Gastrocnemius medialis (tissue), 4 donors: ENCODE measurements at regions of chr22 and their contacts with region 1.

Region 1: GRCh38 chr22:40679964-40680818 is 907 bp downstream of the MCHR1 start:
- DNase-seq: no peak
- ATAC-seq: no peak
- H3K4me3 ChIP-seq: no peak overlapping the region
- H3K27ac ChIP-seq: no peak overlapping the region
- H3K4me1 ChIP-seq: peaks cover 11 to 13% of the 10 kb centered on the region in 2 donors
- H3K27me3 ChIP-seq: peaks cover 11 to 15% (median 13%) of the 10 kb centered on the region in 3 donors
- CTCF ChIP-seq: no peak
- POLR2A ChIP-seq: no peak

Region 2: GRCh38 chr22:40757071-40757470 is 76.9 kb after region 1 on chr22:
- in situ Hi-C with region 1: no loop called
- intact Hi-C with region 1: loop called (anchors 10 kb)
- DNase-seq: no peak
- ATAC-seq: no peak
- H3K4me3 ChIP-seq: no peak overlapping the region
- H3K27ac ChIP-seq: no peak overlapping the region
- H3K4me1 ChIP-seq: no peaks in the 10 kb centered on the region
- H3K27me3 ChIP-seq: no peaks in the 10 kb centered on the region
- CTCF ChIP-seq: no peak
- POLR2A ChIP-seq: no peak